Mammary epithelial cell (primary cell): ENCODE measurements at regions of chr1 and their contacts with region 1.

Region 1: GRCh38 chr1:9960706-9961562 is 17.7 kb downstream of the NMNAT1 start:
- DNase-seq: no peak
- H3K4me3 ChIP-seq: no peak overlapping the region
- H3K27ac ChIP-seq: no peak overlapping the region
- H3K4me1 ChIP-seq: no peaks in the 10 kb centered on the region
- H3K27me3 ChIP-seq: no peaks in the 10 kb centered on the region
- CTCF ChIP-seq: no peak

Region 2: DNA sequence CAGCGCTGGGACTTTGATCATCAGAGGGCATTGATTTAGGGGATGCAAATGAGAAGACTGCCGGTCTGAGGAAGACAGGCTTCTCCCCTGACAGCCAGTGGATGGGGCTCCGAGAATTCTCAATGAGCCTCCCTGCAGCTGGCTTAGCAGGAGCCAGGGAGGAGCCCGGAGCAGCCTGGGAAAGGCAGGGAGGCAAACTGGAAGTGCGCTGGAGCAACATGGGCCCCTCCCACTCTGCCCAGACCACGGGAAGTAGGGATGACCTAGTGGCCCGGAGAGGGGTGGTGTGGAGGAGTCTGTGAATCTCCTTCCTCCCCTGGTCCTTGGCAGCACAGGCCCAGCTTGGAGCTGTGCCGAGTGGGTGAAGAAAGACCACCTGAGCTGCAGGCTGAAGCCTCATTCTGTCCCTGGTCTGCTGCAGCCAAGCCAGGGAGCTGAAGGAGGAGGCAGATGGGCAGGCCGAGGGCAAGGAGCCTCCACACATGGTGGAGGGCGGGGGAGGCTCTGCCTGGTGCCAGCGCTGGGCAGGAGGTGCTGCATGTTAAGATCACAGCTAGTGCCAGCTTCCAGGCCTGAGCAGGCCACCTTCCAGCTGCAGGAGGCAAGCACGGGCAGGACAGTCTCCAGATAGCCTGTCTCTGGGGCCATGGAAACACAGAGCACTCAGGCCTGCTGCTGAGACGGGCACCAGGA is 125.0 kb before region 1 on chr1:
- CTCF ChIA-PET with region 1: no interaction called
- dilution Hi-C with region 1: no loop called
- in situ Hi-C with region 1: no loop called
- intact Hi-C with region 1: no loop called
- DNase-seq: peak; percentile 55
- H3K4me3 ChIP-seq: peak overlapping the region; percentile 3 to 43 (median 25)
- H3K27ac ChIP-seq: peak overlapping the region; percentile 51
- H3K4me1 ChIP-seq: peaks cover 50% of the 10 kb centered on the region
- H3K27me3 ChIP-seq: no peaks in the 10 kb centered on the region
- CTCF ChIP-seq: peak in 1 of 2 donors; percentile 4

Region 3: DNA sequence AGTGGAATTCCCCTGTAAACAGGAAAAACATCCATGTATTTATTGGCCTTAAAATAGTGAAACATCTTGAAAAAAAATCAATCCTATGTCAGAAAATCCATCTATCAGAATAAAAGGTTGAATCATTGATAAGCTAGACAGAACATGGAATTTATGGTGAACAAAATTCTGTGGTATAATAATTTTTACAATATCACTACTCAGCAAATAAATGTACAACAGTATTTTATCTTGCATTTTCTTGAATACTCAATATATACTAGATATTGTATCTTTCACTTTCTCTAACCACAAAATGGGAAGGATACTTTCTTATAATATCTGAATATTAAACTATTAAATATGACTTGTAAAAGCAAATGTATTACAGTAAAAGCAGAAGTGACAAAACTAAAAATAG is 66.1 kb after region 1 on chr1:
- CTCF ChIA-PET with region 1: no interaction called
- dilution Hi-C with region 1: loop called (anchors 5 kb)
- in situ Hi-C with region 1: no loop called
- intact Hi-C with region 1: no loop called
- DNase-seq: no peak
- H3K4me3 ChIP-seq: no peak overlapping the region
- H3K27ac ChIP-seq: no peak overlapping the region
- H3K4me1 ChIP-seq: no peaks in the 10 kb centered on the region
- H3K27me3 ChIP-seq: no peaks in the 10 kb centered on the region
- CTCF ChIP-seq: no peak

Region 4: DNA sequence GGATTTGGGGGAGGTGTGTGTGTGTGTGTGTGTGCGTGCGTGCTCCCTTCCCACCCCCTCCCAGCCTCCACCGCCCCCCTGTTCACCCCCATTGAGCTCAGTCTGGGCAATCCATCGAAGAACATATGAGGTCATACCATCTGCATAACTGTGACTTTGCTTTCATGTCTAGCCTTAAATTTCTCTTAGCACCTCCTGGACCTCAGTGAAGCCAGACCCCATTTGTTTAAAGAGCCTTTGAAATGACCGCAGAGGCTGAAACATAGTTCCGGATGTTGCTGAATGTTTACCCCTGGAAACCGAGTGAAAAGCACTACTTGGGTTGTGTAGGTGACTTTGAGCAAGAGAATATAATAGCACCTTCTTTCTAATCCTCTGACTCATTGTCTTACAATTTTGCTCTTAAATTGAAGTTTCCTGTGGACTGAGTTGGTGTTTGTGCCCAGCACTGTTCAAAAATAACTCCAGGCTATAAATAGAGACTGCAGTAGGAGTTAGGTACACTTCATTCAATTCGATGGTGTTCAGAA is 147.3 kb after region 1 on chr1:
- CTCF ChIA-PET with region 1: no interaction called
- dilution Hi-C with region 1: no loop called
- in situ Hi-C with region 1: loop called in 1 of 2 experiments (anchors 25 kb)
- intact Hi-C with region 1: no loop called
- DNase-seq: peak; percentile 88
- H3K4me3 ChIP-seq: no peak overlapping the region
- H3K27ac ChIP-seq: peak overlapping the region; percentile 50
- H3K4me1 ChIP-seq: peaks cover 26% of the 10 kb centered on the region
- H3K27me3 ChIP-seq: no peaks in the 10 kb centered on the region
- CTCF ChIP-seq: no peak

Region 5: DNA sequence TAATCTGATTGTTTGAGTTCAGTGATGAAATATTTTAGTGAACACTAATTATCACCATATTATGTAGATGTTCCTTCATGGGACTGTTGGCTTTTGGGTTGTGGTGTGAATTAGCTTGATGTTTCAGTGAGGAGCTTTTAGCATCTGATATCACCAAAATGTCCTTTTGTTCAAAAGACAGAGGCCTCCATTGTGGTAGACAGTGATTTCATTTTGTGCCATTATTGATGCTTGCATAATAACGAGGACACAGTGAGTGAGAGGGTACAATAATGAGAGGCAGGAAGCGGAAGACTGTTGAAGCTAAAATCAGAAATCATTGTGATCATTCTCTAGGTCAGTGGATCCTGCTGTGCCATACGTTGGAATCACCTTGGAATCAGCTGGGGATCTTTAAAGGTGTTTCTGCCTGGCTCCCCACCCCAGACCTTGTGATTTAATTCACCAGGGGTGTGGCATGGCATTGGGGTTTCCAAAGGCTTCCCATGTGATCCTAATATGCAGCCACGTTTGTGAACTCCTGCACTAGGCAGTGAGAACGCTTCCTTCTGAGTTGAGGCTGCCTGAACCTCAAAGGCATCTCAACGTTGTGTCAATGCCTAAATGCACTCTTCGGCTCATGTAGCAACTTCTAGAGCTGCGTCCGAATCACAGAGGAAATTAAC is 167.3 kb after region 1 on chr1:
- CTCF ChIA-PET with region 1: no interaction called
- dilution Hi-C with region 1: loop called (anchors 10 kb)
- in situ Hi-C with region 1: loop called in 1 of 2 experiments (anchors 25 kb)
- intact Hi-C with region 1: no loop called
- DNase-seq: no peak
- H3K4me3 ChIP-seq: no peak overlapping the region
- H3K27ac ChIP-seq: no peak overlapping the region
- H3K4me1 ChIP-seq: no peaks in the 10 kb centered on the region
- H3K27me3 ChIP-seq: no peaks in the 10 kb centered on the region
- CTCF ChIP-seq: no peak

Region 6: GRCh38 chr1:10152709-10153284 is 191.9 kb after region 1 on chr1:
- CTCF ChIA-PET with region 1: no interaction called
- dilution Hi-C with region 1: loop called (anchors 5 kb)
- in situ Hi-C with region 1: no loop called
- intact Hi-C with region 1: no loop called
- DNase-seq: peak; percentile 40
- H3K4me3 ChIP-seq: no peak overlapping the region
- H3K27ac ChIP-seq: no peak overlapping the region
- H3K4me1 ChIP-seq: no peaks in the 10 kb centered on the region
- H3K27me3 ChIP-seq: no peaks in the 10 kb centered on the region
- CTCF ChIP-seq: peak; percentile 71 to 81

Region 7: GRCh38 chr1:10257851-10258250 is 296.9 kb after region 1 on chr1:
- CTCF ChIA-PET with region 1: no interaction called
- dilution Hi-C with region 1: no loop called
- in situ Hi-C with region 1: no loop called
- intact Hi-C with region 1: no loop called
- DNase-seq: no peak
- H3K4me3 ChIP-seq: no peak overlapping the region
- H3K27ac ChIP-seq: no peak overlapping the region
- H3K4me1 ChIP-seq: no peaks in the 10 kb centered on the region
- H3K27me3 ChIP-seq: no peaks in the 10 kb centered on the region
- CTCF ChIP-seq: no peak